ENCODE measurements at regions of chr10 and their contacts with region 1.

Region 1: DNA sequence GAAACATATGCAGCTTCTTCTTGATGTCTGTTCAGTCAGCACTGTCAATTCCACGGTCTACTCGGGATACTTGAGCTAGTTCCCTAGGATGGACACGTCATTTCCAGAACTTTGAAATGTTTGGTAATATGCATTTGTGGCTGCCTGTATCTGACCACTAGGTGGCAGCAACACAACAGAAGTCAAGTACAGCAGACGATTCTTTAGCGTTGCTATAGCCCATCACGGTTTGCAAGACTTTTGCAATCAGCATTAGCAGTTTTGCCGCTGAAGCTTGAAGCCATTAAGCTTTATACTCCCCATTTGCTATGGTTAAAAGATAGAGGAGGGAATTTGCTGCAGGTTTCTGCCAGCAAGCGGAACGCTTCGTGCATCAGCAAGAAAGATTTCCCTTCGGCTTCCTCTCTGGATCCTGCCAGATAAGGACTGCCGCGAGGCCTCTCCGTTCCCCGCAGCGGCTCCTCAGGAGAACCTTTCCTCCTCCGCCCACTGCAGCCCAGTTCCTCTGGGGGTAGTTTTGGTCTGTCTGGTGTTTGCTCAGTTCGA is 63.5 kb downstream of the ABCC2 start:
- DNase-seq: peak; percentile 67 to 74 (median 71)
- H3K4me3 ChIP-seq: no peak overlapping the region
- H3K4me3 Mint-ChIP-seq: peak overlapping the region in 7 of 8 donors; percentile 10 to 70 (median 39)
- H3K27ac ChIP-seq: no peak overlapping the region
- H3K27ac Mint-ChIP-seq: no peak overlapping the region
- H3K4me1 ChIP-seq: peaks cover 4% of the 10 kb centered on the region
- H3K4me1 Mint-ChIP-seq: peaks cover 4 to 7% (median 5%) of the 10 kb centered on the region in 4 donors
- H3K27me3 ChIP-seq: no peaks in the 10 kb centered on the region
- H3K27me3 Mint-ChIP-seq: no peaks in the 10 kb centered on the region

Region 2: GRCh38 chr10:99870123-99870730 is 24.3 kb after region 1 on chr10:
- CTCF ChIA-PET with region 1: interaction called, 11 read pairs
- POLR2A ChIA-PET with region 1: no interaction called
- intact Hi-C with region 1: no loop called
- DNase-seq: peak; percentile 71 to 79 (median 74)
- H3K4me3 ChIP-seq: no peak overlapping the region
- H3K4me3 Mint-ChIP-seq: peak overlapping the region; percentile 29 to 89 (median 80)
- H3K27ac ChIP-seq: no peak overlapping the region
- H3K27ac Mint-ChIP-seq: peak overlapping the region in 5 of 7 donors; percentile 6 to 82 (median 70)
- H3K4me1 ChIP-seq: peaks cover 21% of the 10 kb centered on the region
- H3K4me1 Mint-ChIP-seq: peaks cover 8 to 35% (median 22%) of the 10 kb centered on the region in 4 donors
- H3K27me3 ChIP-seq: peaks cover 20% of the 10 kb centered on the region
- H3K27me3 Mint-ChIP-seq: peaks cover 67 to 70% of the 10 kb centered on the region in 2 donors

Region 3: DNA sequence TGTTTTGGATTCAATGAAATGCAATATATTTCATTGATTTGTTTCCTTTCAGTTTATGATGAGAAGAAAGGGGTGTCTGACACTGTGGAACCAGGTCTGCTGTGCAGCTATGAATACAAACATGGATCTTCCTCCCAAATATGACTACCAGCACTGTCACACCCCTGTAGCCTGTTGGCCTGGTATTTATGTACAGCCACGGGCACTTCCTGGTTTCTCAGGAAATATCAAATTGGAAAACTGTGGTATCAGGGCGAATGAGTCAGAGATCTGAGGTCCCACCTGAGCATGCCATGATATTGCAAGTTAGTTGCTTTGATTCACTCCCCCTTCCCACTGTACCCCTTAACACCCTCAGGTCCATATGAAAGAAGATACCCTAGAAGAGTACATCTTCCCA is 76.0 kb after region 1 on chr10:
- CTCF ChIA-PET with region 1: no interaction called
- POLR2A ChIA-PET with region 1: no interaction called
- intact Hi-C with region 1: no loop called
- DNase-seq: no peak
- H3K4me3 ChIP-seq: no peak overlapping the region
- H3K4me3 Mint-ChIP-seq: no peak overlapping the region
- H3K27ac ChIP-seq: no peak overlapping the region
- H3K27ac Mint-ChIP-seq: no peak overlapping the region
- H3K4me1 ChIP-seq: no peaks in the 10 kb centered on the region
- H3K4me1 Mint-ChIP-seq: peaks cover 0 to 2% (median 0%) of the 10 kb centered on the region in 4 donors
- H3K27me3 ChIP-seq: no peaks in the 10 kb centered on the region
- H3K27me3 Mint-ChIP-seq: no peaks in the 10 kb centered on the region

Region 4: GRCh38 chr10:100020142-100020885 is 174.4 kb after region 1 on chr10:
- CTCF ChIA-PET with region 1: interaction called, 12 read pairs
- POLR2A ChIA-PET with region 1: no interaction called
- intact Hi-C with region 1: no loop called
- DNase-seq: no peak
- H3K4me3 ChIP-seq: no peak overlapping the region
- H3K4me3 Mint-ChIP-seq: no peak overlapping the region
- H3K27ac ChIP-seq: no peak overlapping the region
- H3K27ac Mint-ChIP-seq: peak overlapping the region in 2 of 7 donors; percentile 12 to 25
- H3K4me1 ChIP-seq: no peaks in the 10 kb centered on the region
- H3K4me1 Mint-ChIP-seq: peaks cover 0 to 4% (median 1%) of the 10 kb centered on the region in 4 donors
- H3K27me3 ChIP-seq: no peaks in the 10 kb centered on the region
- H3K27me3 Mint-ChIP-seq: peaks cover 0 to 4% of the 10 kb centered on the region in 2 donors

Region 5: DNA sequence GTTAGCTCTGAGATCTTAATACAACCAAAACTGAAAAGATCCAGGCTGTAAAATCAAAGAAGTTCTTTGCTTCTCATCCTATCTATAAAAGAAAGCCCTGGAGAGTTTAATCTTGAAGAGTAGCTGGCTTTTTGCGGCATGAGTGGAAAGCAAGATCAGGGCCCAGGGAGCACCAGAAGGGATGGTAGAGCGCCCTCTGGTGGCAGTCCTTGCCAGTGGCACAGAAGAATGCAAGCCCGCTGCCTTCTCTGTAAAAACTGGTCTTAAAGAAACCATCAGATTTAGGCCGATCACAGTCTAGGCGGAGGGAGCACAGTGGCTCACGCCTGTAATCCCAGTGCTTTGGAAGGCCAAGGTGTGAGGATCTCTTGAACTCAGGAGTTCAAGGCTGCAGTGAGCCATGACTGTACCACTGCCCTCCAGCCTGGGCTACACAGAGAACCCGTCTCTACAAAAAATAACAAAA is 200.1 kb after region 1 on chr10:
- CTCF ChIA-PET with region 1: interaction called, 336 read pairs
- POLR2A ChIA-PET with region 1: interaction called, 6 read pairs
- intact Hi-C with region 1: no loop called
- DNase-seq: peak; percentile 63 to 70 (median 67)
- H3K4me3 ChIP-seq: no peak overlapping the region
- H3K4me3 Mint-ChIP-seq: no peak overlapping the region
- H3K27ac ChIP-seq: no peak overlapping the region
- H3K27ac Mint-ChIP-seq: peak overlapping the region in 1 of 7 donors; percentile 42
- H3K4me1 ChIP-seq: no peaks in the 10 kb centered on the region
- H3K4me1 Mint-ChIP-seq: no peaks in the 10 kb centered on the region
- H3K27me3 ChIP-seq: no peaks in the 10 kb centered on the region
- H3K27me3 Mint-ChIP-seq: peaks cover 1 to 16% of the 10 kb centered on the region in 2 donors

Region 6: GRCh38 chr10:100081075-100082001 is 235.4 kb after region 1 on chr10 and contains the start of gene CPN1:
- CTCF ChIA-PET with region 1: no interaction called
- POLR2A ChIA-PET with region 1: no interaction called
- intact Hi-C with region 1: no loop called
- DNase-seq: no peak
- H3K4me3 ChIP-seq: no peak within 1 kb of the TSS
- H3K4me3 Mint-ChIP-seq: no peak within 1 kb of the TSS
- H3K27ac ChIP-seq: no peak within 1 kb of the TSS
- H3K27ac Mint-ChIP-seq: no peak within 1 kb of the TSS
- H3K4me1 ChIP-seq: no peaks in the 10 kb centered on the region
- H3K4me1 Mint-ChIP-seq: no peaks in the 10 kb centered on the region
- H3K27me3 ChIP-seq: no peaks in the 10 kb centered on the region
- H3K27me3 Mint-ChIP-seq: peaks cover 15 to 22% of the 10 kb centered on the region in 2 donors
- total RNA-seq, gene CPN1: not detected